Lower leg skin (tissue), 4 donors: ENCODE measurements at regions of chr16 and their contacts with region 1.

Region 1: GRCh38 chr16:67537636-67538591 is 9.3 kb downstream of the RIPOR1 start:
- DNase-seq: peak in 1 of 2 donors; percentile 94
- H3K4me3 ChIP-seq: peak overlapping the region; percentile 36
- CTCF ChIP-seq: no peak
- POLR2A ChIP-seq: no peak

Region 2: DNA sequence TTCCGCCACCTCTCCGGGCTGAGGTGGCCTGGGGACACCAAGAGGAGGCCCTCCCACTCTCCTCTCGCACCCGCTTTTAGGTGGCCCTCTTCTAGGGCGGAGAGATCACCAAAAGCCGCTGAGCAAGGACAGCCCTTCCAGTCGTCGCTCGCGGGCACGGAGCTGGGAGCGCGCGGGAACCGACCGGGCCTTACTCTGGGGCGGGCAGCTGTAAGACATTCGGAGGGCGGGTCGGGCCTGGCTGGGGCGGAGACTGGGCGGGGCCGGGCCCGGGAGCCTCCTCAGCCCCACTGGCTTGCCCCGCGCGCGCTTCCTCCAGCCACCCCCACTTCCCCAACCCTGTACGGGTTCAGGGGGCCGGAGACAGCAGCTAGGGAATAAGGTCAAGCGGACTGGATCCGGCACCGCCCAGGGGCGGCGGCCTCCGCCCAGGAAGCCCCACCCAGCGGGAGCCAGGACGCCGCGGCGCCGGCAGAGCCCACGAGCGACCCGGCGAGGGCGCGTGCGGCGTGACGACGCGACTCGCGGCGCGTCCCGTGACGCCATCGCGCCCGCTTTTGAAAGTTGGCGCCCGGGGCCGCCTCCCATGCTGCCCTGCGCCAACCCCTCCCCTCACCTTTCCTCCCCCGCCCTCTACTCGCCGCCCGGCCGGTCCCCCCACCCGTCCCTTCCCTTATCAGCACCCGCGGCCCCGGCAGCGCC is 24.1 kb after region 1 on chr16:
- intact Hi-C with region 1: loop called (anchors 1 kb)
- DNase-seq: peak; percentile 96 to 99
- H3K4me3 ChIP-seq: peak overlapping the region; percentile 39
- CTCF ChIP-seq: no peak
- POLR2A ChIP-seq: no peak